Activated T-helper 1 cell treated with anti-CD3 and anti-CD28 coated beads, Interleukin-12 subunit alpha, Interleukin-12 subunit beta, Interleukin-2, Interleukin-4 antibody, amounts not matched to agents 30 ng/mL and 10 ng/mL and 1 ng/mL, durations not matched to agents 14 hours and 24 hours and 36 hours (primary cell): ENCODE measurements at regions of chr14 and their contacts with region 1.

Region 1: GRCh38 chr14:49946320-49947141 is 53.6 kb downstream of the ARF6 start:
- DNase-seq: no peak
- H3K4me3 Mint-ChIP-seq: peak overlapping the region; percentile 71
- H3K27ac Mint-ChIP-seq: peak overlapping the region; percentile 90
- H3K4me1 Mint-ChIP-seq: peaks cover 79% of the 10 kb centered on the region
- H3K27me3 Mint-ChIP-seq: no peaks in the 10 kb centered on the region

Region 2: DNA sequence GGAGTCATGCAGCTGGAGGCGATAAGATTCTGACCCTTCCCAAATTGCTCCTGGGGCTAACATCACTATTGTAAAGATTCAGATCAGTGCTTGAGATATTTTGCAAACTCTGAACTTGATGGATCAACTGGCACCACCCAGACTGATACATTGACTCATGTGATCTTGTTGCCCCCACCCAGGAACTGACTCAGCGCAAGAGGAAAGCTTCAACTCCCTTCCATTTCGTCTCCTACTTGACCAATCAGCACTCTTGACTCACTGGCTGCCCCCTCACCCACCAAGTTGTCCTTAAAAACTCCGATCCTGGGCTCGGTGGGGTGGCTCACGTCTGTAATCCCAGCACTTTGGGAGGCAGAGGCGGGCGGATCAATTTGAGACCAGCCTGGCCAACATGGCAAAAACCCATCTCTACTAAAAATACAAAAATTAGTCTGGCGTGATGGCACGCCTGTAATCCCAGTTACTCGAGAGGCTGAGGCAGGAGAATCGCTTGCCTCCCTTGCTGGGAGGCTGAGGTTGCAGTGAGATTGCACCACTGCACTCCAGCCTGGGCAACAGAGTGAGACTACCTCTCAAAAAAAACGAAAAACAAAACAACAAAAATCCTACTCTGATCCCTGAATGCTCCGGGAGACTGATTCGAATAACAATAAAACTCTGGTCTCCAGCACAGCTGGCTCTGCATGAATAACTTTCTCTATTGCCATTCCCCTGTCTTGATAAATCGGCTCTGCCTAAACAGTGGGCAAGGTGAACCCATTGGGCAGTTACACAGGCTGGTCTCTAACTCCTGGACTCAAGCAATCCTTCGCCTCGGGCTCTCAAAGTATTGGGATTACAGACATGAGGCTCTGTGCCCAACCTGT is 63.5 kb before region 1 on chr14:
- intact Hi-C with region 1: no loop called
- DNase-seq: no peak
- H3K4me3 Mint-ChIP-seq: no peak overlapping the region
- H3K27ac Mint-ChIP-seq: no peak overlapping the region
- H3K4me1 Mint-ChIP-seq: peaks cover 39% of the 10 kb centered on the region
- H3K27me3 Mint-ChIP-seq: no peaks in the 10 kb centered on the region

Region 3: GRCh38 chr14:49897968-49898367 is 48.6 kb before region 1 on chr14:
- intact Hi-C with region 1: loop called (anchors 2 kb)
- DNase-seq: no peak
- H3K4me3 Mint-ChIP-seq: peak overlapping the region; percentile 84
- H3K27ac Mint-ChIP-seq: peak overlapping the region; percentile 94
- H3K4me1 Mint-ChIP-seq: peaks cover 33% of the 10 kb centered on the region
- H3K27me3 Mint-ChIP-seq: no peaks in the 10 kb centered on the region

Region 4: DNA sequence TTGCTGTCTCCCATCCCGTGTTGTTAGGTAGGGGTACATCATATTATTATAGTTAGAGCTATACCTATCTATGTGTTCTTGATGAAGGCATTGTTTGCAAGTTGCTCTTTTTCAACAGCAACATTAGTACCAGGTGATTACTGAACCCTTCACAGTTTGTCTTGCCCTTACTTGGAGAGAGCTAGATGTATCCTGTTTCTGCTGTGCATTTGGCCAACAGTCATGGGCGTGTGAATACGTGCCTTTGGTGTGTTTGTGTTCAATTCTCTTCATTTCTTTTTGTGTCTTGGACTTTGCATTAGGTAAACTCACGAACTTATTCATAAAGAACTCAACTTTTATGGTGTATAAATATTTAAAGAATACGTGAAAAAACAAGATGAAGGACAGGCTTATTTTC is 39.3 kb before region 1 on chr14:
- intact Hi-C with region 1: loop called (anchors 2 kb)
- DNase-seq: no peak
- H3K4me3 Mint-ChIP-seq: peak overlapping the region; percentile 42
- H3K27ac Mint-ChIP-seq: peak overlapping the region; percentile 29
- H3K4me1 Mint-ChIP-seq: peaks cover 48% of the 10 kb centered on the region
- H3K27me3 Mint-ChIP-seq: no peaks in the 10 kb centered on the region

Region 5: DNA sequence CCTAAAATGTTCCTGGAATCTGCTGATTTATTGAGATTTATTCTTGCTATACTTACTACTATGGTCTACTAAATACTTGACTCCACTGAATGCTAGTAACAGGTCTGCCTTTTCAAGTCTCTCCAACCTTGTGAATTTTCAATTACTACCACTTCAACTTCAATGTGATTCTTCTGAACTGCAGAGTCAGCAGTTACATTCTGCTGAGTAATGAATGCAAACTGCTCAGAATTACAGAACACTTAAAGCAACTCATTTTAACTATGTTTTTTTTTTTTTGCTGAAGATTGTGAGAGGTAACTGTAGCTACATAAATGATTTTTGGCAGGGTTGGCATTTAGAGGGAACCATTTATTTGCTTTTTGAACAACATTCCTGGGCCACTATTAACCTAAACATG is 11.9 kb before region 1 on chr14:
- intact Hi-C with region 1: loop called (anchors 2 kb)
- DNase-seq: no peak
- H3K4me3 Mint-ChIP-seq: no peak overlapping the region
- H3K27ac Mint-ChIP-seq: no peak overlapping the region
- H3K4me1 Mint-ChIP-seq: peaks cover 19% of the 10 kb centered on the region
- H3K27me3 Mint-ChIP-seq: no peaks in the 10 kb centered on the region

Region 6: DNA sequence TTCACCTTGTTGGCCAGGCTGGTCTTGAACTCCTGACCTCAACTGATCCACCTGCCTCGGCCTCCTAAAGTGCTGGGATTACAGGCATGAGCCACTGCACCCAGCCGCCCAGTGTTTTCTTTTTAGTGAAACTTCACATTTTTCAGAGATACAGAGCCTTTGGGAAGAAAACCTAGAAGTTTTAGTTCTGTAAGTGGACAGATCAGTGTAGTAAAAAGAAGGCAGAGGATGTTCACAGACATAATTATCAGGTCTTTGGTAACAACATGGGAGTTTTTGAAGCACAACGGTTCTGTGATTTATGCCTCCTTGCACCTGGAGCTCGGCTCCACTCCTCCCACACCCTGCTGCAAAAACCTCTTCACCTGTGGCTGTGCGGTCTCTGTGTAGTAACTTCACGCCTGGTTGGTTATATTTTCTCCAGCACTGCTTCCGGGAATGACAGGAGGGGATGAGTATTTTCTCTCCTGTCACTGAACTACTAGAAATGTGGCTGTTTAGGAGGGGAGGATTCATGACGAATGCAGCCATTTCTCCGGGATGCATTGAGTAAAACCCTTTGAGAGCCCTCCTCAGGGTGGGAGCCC is 13.4 kb after region 1 on chr14:
- intact Hi-C with region 1: loop called (anchors 1 kb)
- DNase-seq: peak; percentile 17
- H3K4me3 Mint-ChIP-seq: peak overlapping the region; percentile 37
- H3K27ac Mint-ChIP-seq: peak overlapping the region; percentile 43
- H3K4me1 Mint-ChIP-seq: peaks cover 52% of the 10 kb centered on the region
- H3K27me3 Mint-ChIP-seq: no peaks in the 10 kb centered on the region

Region 7: DNA sequence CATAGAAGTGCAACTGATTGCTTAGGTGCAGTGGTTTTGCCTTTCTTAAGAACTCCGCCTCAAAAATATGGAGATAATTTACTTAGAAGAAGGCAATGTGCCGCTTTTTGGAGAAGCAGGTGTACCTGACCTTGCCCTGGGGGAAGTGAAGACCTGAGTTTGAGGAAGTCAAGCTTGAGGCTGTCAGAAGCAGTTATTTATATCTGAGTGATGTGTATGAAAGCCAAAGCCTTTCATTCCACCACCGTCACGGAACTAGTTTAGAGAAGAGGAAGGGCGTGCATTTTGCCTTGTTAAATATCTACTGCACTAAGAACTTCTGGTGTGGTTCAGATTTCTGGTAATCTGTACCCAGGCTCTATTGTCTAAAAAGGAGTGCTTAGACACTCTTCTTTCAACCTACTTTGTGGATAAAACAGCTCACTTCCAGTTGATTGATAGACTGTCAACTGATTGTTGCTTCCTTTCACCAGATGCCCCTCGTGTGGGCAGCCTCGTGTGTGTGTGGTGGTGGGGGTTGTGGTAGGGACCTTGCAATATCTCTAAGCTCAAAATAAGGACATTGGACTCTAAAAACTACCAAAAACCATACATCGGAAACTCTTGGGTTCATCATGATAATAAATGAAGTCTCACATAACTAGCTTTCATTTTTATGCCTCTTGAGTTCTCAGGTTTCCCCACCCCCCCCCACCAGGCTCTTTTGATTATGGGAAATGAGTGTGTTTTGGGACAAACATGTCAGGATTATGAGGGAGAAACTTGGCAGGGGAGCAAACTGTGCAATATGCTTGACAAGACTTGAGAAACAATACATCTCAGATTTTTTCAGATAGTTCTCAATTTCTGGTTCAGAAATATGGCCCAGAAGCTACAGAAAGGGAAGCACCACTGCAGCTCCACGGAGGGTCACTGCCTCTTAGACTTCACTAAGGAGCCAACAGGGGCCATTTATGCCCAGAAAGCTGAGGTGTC is 24.9 kb after region 1 on chr14:
- intact Hi-C with region 1: loop called (anchors 1 kb)
- DNase-seq: peak; percentile 48
- H3K4me3 Mint-ChIP-seq: peak overlapping the region; percentile 83
- H3K27ac Mint-ChIP-seq: peak overlapping the region; percentile 99
- H3K4me1 Mint-ChIP-seq: peaks cover 61% of the 10 kb centered on the region
- H3K27me3 Mint-ChIP-seq: no peaks in the 10 kb centered on the region

Region 8: GRCh38 chr14:49984424-49984823 is 37.9 kb after region 1 on chr14:
- intact Hi-C with region 1: loop called (anchors 1 kb)
- DNase-seq: no peak
- H3K4me3 Mint-ChIP-seq: no peak overlapping the region
- H3K27ac Mint-ChIP-seq: peak overlapping the region; percentile 93
- H3K4me1 Mint-ChIP-seq: peaks cover 66% of the 10 kb centered on the region
- H3K27me3 Mint-ChIP-seq: no peaks in the 10 kb centered on the region